G401 (cell line): ENCODE measurements at regions of chr17 and their contacts with region 1.

Region 1: DNA sequence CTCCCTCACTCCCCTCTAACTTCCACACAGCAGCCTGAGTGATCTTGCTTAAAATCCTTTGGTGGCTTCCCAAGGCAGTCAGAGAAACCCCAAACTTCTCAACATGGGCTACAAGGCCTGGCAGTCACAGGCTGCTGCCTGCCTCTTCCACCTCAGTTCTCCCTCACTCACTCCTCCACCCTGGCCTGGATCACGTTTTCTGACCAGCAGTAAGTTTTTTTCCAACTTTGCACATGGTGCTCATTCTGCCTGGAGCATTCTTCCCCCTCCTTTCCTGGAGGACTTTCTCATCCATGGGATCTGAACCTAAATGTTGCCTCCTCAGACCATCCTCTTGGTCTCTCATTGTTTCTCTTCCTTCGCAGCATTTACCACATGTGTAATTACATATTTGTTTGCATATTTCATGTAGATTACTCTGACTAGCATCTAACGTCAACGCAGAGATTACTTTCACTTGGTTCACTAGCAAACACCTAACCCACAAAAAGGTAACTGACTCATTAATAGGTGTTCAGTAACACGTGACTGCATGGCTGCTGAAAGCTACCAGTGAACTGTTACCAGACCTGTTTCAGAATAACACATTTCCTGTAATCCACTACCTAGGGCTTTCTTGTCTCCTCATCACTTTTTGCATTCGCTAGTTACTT is 17.1 kb downstream of the GNA13 start:
- DNase-seq: no peak

Region 2: GRCh38 chr17:65109990-65110680 is 70.7 kb after region 1 on chr17:
- in situ Hi-C with region 1: loop called (anchors 5 kb)
- DNase-seq: no peak